HAP-1 (cell line): ENCODE measurements at regions of chr1 and their contacts with region 1.

Region 1: DNA sequence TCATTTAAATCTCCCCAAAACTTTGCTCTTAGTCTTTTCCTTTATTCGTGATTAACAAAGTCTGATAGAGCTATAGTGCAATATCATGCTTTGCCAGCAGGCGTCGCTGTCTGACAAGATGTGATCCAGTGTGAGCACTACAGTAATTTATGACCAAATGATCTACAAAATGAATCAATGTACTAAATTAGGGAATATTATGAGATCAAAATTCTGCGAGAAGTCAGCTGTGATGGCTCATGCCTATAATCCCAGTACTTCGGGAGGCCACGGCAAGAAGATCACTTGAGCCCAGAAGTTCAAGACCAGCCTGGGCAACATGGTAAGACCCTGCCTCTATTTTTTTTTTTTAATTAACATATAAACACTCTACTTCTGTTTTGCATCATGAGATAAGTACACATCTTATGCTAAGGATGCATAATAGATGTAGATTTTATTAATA is 3.6 kb upstream of the SPSB1 start:
- DNase-seq: peak; percentile 26 to 83
- H3K4me3 ChIP-seq: no peak overlapping the region
- H3K4me1 ChIP-seq: peaks cover 8% of the 10 kb centered on the region
- H3K27me3 ChIP-seq: no peaks in the 10 kb centered on the region

Region 2: DNA sequence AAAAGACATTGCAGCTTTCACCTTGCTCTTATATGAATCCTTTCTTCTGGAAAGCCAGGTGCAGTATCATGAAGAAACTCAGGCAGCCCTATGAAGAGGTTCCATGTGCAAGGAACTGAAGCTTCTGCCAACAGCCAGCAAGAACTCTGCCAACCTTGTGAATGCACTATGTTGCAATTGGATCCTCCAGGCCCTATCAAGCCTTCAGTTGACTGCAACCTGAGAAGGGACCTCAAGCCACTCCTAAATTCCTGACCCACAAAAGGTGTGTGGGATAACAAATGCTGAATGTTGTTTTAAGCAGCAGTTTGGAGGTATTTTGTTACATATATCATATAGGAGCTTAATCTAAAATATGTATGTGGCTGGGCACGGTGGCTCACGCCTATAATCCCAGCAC is 555.6 kb before region 1 on chr1:
- in situ Hi-C with region 1: no loop called
- DNase-seq: no peak
- H3K4me3 ChIP-seq: no peak overlapping the region
- H3K4me1 ChIP-seq: no peaks in the 10 kb centered on the region
- H3K27me3 ChIP-seq: no peaks in the 10 kb centered on the region

Region 3: DNA sequence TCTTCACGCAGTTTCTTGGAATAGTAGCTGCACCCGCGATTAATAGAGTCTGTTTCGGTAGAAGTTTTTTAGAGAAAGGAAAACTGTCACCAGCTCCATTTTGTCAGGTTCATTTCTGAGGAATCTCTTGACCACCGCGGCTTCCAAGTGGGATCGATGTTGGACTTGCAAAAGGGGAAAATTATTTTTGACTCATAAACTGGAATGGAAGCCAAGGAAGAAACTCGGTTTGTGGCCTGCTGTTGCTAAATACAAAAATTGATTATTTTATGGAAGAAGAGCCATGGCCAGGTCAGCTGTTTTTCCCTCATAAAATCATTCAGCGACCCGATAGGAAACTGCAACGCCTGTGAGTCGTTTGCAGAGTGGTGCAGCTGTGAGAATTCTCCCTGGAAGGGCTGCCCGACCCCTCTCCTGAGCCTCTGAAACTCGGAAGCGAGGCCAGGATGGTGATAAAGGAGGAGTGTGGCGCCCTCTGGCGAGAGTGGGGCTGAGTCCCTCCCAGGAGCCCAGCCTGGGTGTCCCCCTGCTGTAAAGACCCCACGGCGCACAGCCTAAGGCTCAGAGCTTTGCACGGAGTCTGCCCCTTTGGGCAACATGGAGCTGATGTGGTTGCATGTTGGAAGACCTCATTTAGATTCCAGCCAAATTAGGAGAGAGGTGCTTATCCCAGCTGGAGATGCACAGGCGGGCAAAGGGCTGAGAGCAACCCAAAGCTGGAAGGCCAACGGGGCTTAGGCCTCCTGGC is 166.5 kb after region 1 on chr1:
- in situ Hi-C with region 1: loop called (anchors 10 kb)
- DNase-seq: peak; percentile 55 to 86
- H3K4me3 ChIP-seq: no peak overlapping the region
- H3K4me1 ChIP-seq: no peaks in the 10 kb centered on the region
- H3K27me3 ChIP-seq: no peaks in the 10 kb centered on the region